CD4-positive, alpha-beta T cell (primary cell): ENCODE measurements at regions of chr7 and their contacts with region 1.

Region 1: DNA sequence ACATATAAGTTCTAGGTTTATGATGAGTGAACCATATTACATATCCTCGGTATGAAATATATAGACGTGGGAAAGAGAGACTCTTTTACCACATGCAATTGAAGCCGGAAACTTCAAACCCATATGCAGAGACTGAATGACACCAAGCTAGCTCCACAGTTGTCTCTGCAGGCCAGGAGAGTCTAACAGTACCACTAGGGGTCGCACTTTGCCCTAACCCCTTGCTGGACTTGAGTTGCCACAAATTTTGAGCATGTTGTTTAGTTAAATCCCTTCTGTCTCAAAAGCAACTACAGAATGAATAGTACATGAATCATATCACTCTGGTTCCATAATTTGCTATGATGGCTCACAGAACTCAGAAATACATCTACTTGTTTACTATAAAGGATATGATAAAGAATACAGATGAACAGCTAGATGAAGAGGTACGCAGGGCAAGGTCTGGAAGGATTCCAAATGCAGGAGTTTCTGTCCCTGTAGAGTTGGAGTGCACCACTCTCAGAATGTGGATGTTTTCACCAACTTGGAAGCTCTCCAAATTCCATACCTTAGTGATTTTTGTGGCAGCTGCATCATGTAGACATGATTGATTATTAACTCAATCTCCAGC is 112.4 kb upstream of the YAE1 start:
- DNase-seq: peak in 13 of 14 experiments; percentile 3 to 69 (median 25)
- ATAC-seq: peak; percentile 55
- H3K4me3 ChIP-seq: no peak overlapping the region
- H3K4me3 Mint-ChIP-seq: no peak overlapping the region
- H3K27ac ChIP-seq: no peak overlapping the region
- H3K27ac Mint-ChIP-seq: no peak overlapping the region
- H3K4me1 ChIP-seq: no peaks in the 10 kb centered on the region
- H3K4me1 Mint-ChIP-seq: no peaks in the 10 kb centered on the region
- H3K27me3 ChIP-seq: peaks cover 3 to 5% of the 10 kb centered on the region in 2 experiments
- H3K27me3 Mint-ChIP-seq: peaks cover 6% of the 10 kb centered on the region
- CTCF ChIP-seq: peak; percentile 71

Region 2: GRCh38 chr7:39517240-39517639 is 63.4 kb after region 1 on chr7:
- CTCF ChIA-PET with region 1: interaction called, 4 read pairs
- POLR2A ChIA-PET with region 1: no interaction called
- intact Hi-C with region 1: loop called in 1 of 2 experiments (anchors 2 kb)
- DNase-seq: no peak
- ATAC-seq: no peak
- H3K4me3 ChIP-seq: no peak overlapping the region
- H3K4me3 Mint-ChIP-seq: no peak overlapping the region
- H3K27ac ChIP-seq: no peak overlapping the region
- H3K27ac Mint-ChIP-seq: no peak overlapping the region
- H3K4me1 ChIP-seq: peaks cover 6% of the 10 kb centered on the region
- H3K4me1 Mint-ChIP-seq: peaks cover 4% of the 10 kb centered on the region
- H3K27me3 ChIP-seq: peaks cover 0 to 3% of the 10 kb centered on the region in 2 experiments
- H3K27me3 Mint-ChIP-seq: peaks cover 3% of the 10 kb centered on the region
- CTCF ChIP-seq: no peak